ENCODE measurements at regions of chr10 and their contacts with region 1.

Region 1: GRCh38 chr10:75029857-75030256 is 81.6 kb upstream of the SAMD8 start:
- DNase-seq: peak in 1 of 2 donors; percentile 88
- H3K4me3 ChIP-seq: no peak overlapping the region
- H3K27ac ChIP-seq: no peak overlapping the region
- H3K4me1 ChIP-seq: peaks cover 0 to 18% (median 2%) of the 10 kb centered on the region in 4 donors
- H3K27me3 ChIP-seq: no peaks in the 10 kb centered on the region
- CTCF ChIP-seq: no peak
- EP300 ChIP-seq: no peak
- POLR2A ChIP-seq: no peak

Region 2: GRCh38 chr10:74262856-74263255 is 767.0 kb before region 1 on chr10:
- intact Hi-C with region 1: loop called (anchors 10 kb)
- DNase-seq: no peak
- H3K4me3 ChIP-seq: no peak overlapping the region
- H3K27ac ChIP-seq: no peak overlapping the region
- H3K4me1 ChIP-seq: peaks cover 0 to 11% (median 0%) of the 10 kb centered on the region in 4 donors
- H3K27me3 ChIP-seq: no peaks in the 10 kb centered on the region
- CTCF ChIP-seq: no peak
- EP300 ChIP-seq: no peak
- POLR2A ChIP-seq: no peak

Region 3: GRCh38 chr10:74826142-74827044 is 203.5 kb before region 1 on chr10 and contains the start of gene KAT6B:
- intact Hi-C with region 1: loop called (anchors 10 kb)
- DNase-seq: peak; percentile 100
- H3K4me3 ChIP-seq: peak within 1 kb of the TSS; percentile 76 to 97 (median 92)
- H3K27ac ChIP-seq: peak within 1 kb of the TSS; percentile 99 to 100 (median 99)
- H3K4me1 ChIP-seq: peaks cover 42 to 71% (median 56%) of the 10 kb centered on the region in 4 donors
- H3K27me3 ChIP-seq: no peaks in the 10 kb centered on the region
- CTCF ChIP-seq: peak in 4 of 7 experiments; percentile 4 to 21 (median 12)
- EP300 ChIP-seq: no peak
- POLR2A ChIP-seq: peak in 1 of 4 donors; percentile 17
- total RNA-seq, gene KAT6B: 23.2 to 109 (median 71.0) TPM

Region 4: DNA sequence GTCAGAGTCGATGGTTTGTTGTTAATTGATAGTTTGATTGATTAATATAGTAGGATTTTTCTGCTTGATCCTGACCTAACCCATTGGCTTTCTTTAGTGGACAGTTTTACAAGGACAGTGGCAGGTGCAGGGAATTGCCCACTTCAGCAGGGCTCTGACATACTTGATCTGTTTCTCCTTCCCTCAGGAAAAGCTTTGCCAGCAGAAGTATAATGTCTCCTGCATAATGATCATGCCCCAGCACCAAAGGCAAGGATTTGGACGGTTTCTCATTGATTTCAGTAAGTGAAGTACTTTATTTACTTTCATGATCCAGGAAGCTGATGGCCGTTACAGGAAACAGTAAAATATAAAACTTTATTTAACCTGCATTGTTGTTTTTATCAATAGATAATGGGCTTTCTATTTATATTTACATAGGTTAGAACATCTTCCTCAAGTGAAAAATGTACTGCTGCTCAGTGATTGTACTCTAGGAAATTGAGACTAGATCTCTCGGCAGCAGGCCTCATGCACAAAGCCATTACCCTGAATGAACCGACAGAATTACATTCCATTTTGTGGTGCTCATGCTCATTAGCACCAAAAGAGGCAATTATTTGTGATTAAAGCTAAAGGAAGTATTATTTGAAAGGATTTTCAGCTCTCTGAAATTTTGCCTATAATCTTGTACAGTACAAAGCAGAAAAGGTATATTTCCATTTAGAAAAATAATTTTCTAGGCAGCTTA is 40.9 kb before region 1 on chr10:
- intact Hi-C with region 1: no loop called
- DNase-seq: peak in 1 of 2 donors; percentile 25
- H3K4me3 ChIP-seq: no peak overlapping the region
- H3K27ac ChIP-seq: peak overlapping the region in 1 of 5 donors; percentile 16
- H3K4me1 ChIP-seq: peaks cover 0 to 30% (median 22%) of the 10 kb centered on the region in 4 donors
- H3K27me3 ChIP-seq: no peaks in the 10 kb centered on the region
- CTCF ChIP-seq: no peak
- EP300 ChIP-seq: no peak
- POLR2A ChIP-seq: no peak

Region 5: DNA sequence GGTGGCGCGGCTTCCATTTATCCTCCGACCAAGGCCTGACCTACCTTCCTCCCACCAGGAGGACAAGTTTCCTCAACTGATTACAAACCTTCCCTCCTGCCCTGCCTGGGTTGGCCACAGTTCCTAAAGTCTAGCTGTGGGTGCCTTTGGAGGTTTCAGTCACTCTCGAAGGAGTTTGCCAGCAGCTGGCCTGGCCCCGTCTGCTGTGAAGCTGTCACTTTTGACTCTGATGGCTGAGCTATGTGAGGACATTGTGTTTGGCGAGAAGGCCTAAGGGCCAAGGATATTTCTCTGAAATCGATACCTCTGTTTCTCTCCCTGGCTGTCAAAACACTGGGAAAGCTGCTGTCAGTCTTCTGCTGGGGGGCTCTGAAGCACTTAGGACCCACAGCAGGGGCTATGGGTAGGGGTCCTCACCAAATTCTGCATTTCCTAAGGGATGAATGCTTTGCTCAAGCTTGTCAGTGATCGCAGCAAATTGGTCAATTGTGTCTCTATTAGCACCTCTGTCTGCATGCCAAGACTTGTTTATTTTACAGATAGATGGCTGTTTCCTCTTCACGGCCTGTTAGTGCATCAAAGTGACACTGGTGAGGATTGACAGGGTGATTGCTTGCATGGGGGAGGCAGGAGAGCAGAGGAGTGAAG is 49.7 kb after region 1 on chr10:
- intact Hi-C with region 1: no loop called
- DNase-seq: no peak
- H3K4me3 ChIP-seq: no peak overlapping the region
- H3K27ac ChIP-seq: no peak overlapping the region
- H3K4me1 ChIP-seq: no peaks in the 10 kb centered on the region
- H3K27me3 ChIP-seq: no peaks in the 10 kb centered on the region
- CTCF ChIP-seq: no peak
- EP300 ChIP-seq: no peak
- POLR2A ChIP-seq: no peak